ENCODE measurements at regions of chr1 and their contacts with region 1.

Region 1: DNA sequence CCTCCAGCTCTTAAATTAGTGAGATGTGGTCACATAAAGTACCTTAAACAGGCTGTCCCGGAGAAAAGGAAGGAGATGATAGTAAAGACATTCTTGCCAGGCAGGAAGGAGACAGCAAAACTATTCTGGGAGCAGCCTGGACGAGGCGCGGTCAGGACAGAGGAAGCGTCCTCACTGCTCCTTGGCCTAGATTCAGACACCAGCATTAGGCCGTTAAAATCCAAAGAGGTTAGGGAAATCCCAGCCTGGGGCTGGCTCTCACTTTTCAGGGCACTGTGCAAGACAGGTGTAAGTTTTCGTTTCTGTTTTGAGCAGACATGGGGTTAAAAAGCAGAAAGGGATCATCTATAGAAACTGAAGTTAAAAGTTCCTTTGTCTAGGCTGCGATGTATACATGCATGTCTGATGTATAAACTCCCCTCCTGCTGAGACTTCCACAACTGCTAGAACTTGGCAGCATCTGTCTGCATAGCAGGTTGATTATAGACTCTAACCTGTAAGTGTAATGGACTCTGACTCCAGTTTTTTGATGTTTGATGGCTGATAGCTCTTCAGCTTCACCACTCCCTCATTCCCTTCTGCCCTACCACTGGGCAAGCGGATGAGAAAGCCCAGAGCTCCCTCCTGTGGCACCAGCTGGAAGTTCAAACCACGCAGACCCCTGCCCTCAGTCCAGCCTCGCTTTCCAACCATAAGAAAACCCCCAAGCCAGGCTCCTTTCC is 21.5 kb downstream of the STPG1 start:
- H3K4me3 ChIP-seq: no peak overlapping the region
- H3K27ac ChIP-seq: no peak overlapping the region
- H3K4me1 ChIP-seq: no peaks in the 10 kb centered on the region
- CTCF ChIP-seq: peak; percentile 72

Region 2: GRCh38 chr1:24027838-24028468 is 364.1 kb before region 1 on chr1:
- CTCF ChIA-PET with region 1: no interaction called
- POLR2A ChIA-PET with region 1: no interaction called
- H3K4me3 ChIP-seq: no peak overlapping the region
- H3K27ac ChIP-seq: no peak overlapping the region
- H3K4me1 ChIP-seq: no peaks in the 10 kb centered on the region
- CTCF ChIP-seq: 0 out of 2 replicates have a peak, but pooled peaks have one; percentile 30

Region 3: GRCh38 chr1:24070821-24071393 is 321.1 kb before region 1 on chr1:
- CTCF ChIA-PET with region 1: interaction called, 26 read pairs
- POLR2A ChIA-PET with region 1: no interaction called
- H3K4me3 ChIP-seq: no peak overlapping the region
- H3K27ac ChIP-seq: no peak overlapping the region
- H3K4me1 ChIP-seq: no peaks in the 10 kb centered on the region
- CTCF ChIP-seq: peak; percentile 88

Region 4: GRCh38 chr1:24133819-24134775 is 257.9 kb before region 1 on chr1:
- CTCF ChIA-PET with region 1: no interaction called
- POLR2A ChIA-PET with region 1: no interaction called
- H3K4me3 ChIP-seq: no peak overlapping the region
- H3K27ac ChIP-seq: no peak overlapping the region
- H3K4me1 ChIP-seq: no peaks in the 10 kb centered on the region
- CTCF ChIP-seq: no peak

Region 5: DNA sequence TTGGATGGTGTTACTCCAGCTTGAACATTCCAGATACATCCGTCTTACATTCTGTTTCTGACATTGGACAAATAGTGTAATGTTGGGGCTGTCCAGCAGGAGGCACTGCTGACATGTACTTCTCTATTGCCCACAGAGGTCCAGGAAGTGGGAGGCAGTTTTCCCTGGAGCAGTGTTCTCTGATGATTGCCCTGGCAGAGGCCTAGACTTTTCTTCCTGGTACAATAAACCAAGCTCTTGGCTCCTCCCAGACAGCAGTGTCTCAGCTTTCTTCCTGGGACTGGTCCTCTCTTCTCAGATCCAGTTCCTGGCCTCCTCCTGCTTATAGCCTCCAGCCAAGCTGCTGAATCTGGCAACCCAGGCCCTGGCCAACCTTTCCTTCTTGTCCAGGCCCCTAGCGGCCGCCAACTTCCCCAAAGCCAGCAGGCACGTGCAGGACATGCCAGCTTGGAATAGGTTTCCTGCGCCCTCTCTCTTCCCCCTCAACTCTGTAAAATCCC is 190.1 kb before region 1 on chr1:
- CTCF ChIA-PET with region 1: interaction called, 611 read pairs
- POLR2A ChIA-PET with region 1: interaction called, 12 read pairs
- H3K4me3 ChIP-seq: no peak overlapping the region
- H3K27ac ChIP-seq: no peak overlapping the region
- H3K4me1 ChIP-seq: no peaks in the 10 kb centered on the region
- CTCF ChIP-seq: peak; percentile 62; the same call in 1 of the 2 replicates

Region 6: GRCh38 chr1:24263251-24263651 is 128.8 kb before region 1 on chr1:
- CTCF ChIA-PET with region 1: interaction called, 20 read pairs
- POLR2A ChIA-PET with region 1: no interaction called
- H3K4me3 ChIP-seq: no peak overlapping the region
- H3K27ac ChIP-seq: no peak overlapping the region
- H3K4me1 ChIP-seq: no peaks in the 10 kb centered on the region
- CTCF ChIP-seq: no peak

Region 7: GRCh38 chr1:24364975-24365678 is 26.9 kb before region 1 on chr1:
- CTCF ChIA-PET with region 1: interaction called, 23 read pairs
- POLR2A ChIA-PET with region 1: no interaction called
- H3K4me3 ChIP-seq: no peak overlapping the region
- H3K27ac ChIP-seq: no peak overlapping the region
- H3K4me1 ChIP-seq: no peaks in the 10 kb centered on the region
- CTCF ChIP-seq: no peak

Region 8: GRCh38 chr1:24415334-24415909 is 23.4 kb after region 1 on chr1 and contains the start of gene NIPAL3:
- CTCF ChIA-PET with region 1: interaction called, 15 read pairs
- POLR2A ChIA-PET with region 1: no interaction called
- H3K4me3 ChIP-seq: peak within 1 kb of the TSS; percentile 49
- H3K27ac ChIP-seq: no peak within 1 kb of the TSS; the same call in 1 of the 2 replicates
- H3K4me1 ChIP-seq: peaks cover 6% of the 10 kb centered on the region
- CTCF ChIP-seq: peak; percentile 96

Region 9: DNA sequence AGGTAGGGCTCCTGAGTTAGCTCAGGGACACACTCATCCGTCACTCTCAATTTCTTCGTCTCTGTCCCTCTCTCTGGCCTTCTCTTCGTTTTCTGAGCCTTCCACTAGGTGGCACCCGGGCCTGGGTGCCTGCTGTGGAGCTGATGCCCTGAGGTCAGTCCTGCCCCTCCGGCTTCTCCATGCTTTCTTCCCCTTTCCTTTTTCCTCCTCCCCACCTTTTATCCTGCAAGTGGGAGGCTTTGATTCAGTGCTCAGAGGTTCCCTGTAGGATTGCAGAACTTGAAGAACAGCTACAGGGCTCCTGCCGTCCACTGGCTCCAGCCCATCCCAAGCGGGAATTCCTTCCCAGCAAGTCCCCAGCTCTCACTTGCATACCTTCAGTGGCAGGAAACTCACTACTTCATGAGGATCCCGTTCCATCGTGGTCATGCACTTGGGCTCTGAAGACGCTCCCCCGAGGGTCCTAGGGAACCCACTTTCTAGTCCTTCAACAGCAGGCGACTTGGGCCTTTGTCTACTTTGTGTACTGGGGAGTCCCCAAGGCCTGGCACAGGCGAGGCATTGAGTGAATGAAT is 296.7 kb after region 1 on chr1:
- CTCF ChIA-PET with region 1: no interaction called
- POLR2A ChIA-PET with region 1: no interaction called
- H3K4me3 ChIP-seq: no peak overlapping the region
- H3K27ac ChIP-seq: no peak overlapping the region
- H3K4me1 ChIP-seq: no peaks in the 10 kb centered on the region; the same call in 1 of the 2 replicates
- CTCF ChIP-seq: peak; percentile 88

Region 10: DNA sequence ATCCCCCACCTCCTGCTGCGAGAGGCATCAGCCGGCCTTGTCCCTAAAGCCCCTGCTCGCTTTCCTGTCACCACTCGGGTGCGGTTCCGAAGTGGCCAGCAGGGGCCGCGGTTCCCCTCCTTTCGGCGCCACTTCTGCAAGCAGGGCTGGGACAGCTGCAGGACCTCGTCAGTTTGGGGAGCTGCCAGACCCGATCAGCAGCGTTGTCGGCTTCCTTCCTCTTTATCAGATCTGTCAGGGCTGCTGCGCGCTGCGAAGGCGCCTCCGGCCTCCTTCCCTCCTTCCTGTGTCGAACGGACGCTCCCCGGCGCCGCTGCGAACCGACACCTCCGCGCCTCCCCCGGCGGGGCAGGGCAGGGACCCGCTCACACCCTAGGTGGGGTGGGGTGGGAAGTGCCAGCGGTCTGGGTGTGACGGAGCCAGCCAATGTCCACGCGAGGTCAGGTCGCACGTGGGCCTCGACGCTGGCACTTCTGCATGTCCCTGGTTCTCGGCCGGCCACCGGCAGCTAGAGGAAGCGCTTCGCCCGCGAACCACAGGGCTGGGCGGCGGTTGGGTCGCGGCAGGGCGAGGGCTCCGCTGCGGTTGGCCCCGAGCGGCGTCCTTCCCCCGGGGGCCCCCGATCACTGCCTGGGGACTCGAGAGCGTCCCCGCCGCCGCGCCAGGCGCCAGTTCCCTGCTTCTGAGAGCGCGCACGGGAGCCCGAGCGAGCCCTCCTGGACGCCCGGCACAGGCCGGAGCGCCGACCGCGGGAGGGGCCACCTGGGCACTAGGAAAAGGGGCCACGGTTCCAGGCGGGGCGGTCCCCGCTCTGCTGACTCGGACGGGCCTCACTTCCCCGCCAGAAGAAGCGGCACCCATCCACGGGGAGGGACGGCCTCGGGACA is 456.2 kb after region 1 on chr1:
- CTCF ChIA-PET with region 1: no interaction called
- POLR2A ChIA-PET with region 1: no interaction called
- H3K4me3 ChIP-seq: peak overlapping the region; percentile 51
- H3K27ac ChIP-seq: peak overlapping the region; percentile 72; the same call in 1 of the 2 replicates
- H3K4me1 ChIP-seq: peaks cover 5% of the 10 kb centered on the region
- CTCF ChIP-seq: peak; percentile 95